ENCODE measurements at regions of chr1 and their contacts with region 1.

Region 1: GRCh38 chr1:115337633-115338456 is at the start of gene NGF:
- DNase-seq: peak; percentile 29 to 89
- H3K4me3 ChIP-seq: peak within 1 kb of the TSS; percentile 56 to 69
- H3K27ac ChIP-seq: peak within 1 kb of the TSS; percentile 87 to 89
- H3K4me1 ChIP-seq: peaks cover 9 to 33% of the 10 kb centered on the region in 2 donors
- H3K27me3 ChIP-seq: no peaks in the 10 kb centered on the region
- CTCF ChIP-seq: no peak
- total RNA-seq, gene NGF: 2.1 TPM

Region 2: DNA sequence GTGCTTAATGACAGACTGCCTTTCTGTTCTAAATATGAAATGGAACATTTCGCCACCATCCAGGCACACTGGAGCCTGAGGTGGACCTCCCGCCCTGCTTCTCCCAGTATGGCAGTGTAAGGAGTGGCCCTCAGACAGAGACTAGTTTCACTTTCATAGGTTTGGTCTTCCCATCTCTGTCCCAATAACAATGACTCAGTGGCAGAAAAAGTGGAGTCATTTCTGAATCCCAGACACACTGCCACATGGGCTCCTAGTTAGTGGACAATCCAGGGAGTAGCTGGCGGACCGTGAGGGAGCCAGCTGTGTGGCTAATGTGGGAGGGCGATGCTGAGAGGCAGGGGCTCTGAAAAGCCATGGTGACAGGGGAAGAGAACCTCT is 152.9 kb before region 1 on chr1:
- intact Hi-C with region 1: loop called (anchors 2 kb)
- DNase-seq: peak; percentile 58 to 89
- H3K4me3 ChIP-seq: peak overlapping the region; percentile 12 to 50
- H3K27ac ChIP-seq: peak overlapping the region; percentile 89 to 95
- H3K4me1 ChIP-seq: peaks cover 16 to 39% of the 10 kb centered on the region in 2 donors
- H3K27me3 ChIP-seq: no peaks in the 10 kb centered on the region
- CTCF ChIP-seq: no peak

Region 3: DNA sequence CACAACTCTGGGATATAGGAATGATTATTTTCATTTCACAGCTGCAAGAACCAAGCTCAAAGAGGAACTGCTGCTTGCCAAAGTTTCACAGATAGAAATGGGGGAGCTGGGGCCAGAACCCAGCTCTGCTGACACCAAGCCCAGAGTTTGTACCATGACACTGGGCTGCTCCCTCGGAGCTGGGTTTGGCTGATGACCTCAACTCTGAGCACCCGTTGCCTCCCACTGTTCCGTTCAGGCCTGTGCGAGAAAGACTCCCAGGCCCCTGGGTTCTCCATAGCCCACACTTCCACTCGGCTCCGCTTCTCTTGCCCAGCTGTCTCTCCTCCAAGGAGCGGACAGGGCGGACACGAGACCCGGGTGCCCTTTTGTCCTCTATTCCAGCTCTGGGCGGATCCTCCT is 55.0 kb before region 1 on chr1:
- intact Hi-C with region 1: loop called (anchors 2 kb)
- DNase-seq: peak; percentile 61 to 85
- H3K4me3 ChIP-seq: peak overlapping the region; percentile 4 to 51
- H3K27ac ChIP-seq: peak overlapping the region; percentile 91 to 95
- H3K4me1 ChIP-seq: peaks cover 11 to 31% of the 10 kb centered on the region in 2 donors
- H3K27me3 ChIP-seq: no peaks in the 10 kb centered on the region
- CTCF ChIP-seq: no peak

Region 4: GRCh38 chr1:115426231-115426771 is 88.5 kb after region 1 on chr1:
- intact Hi-C with region 1: loop called (anchors 5 kb)
- DNase-seq: peak; percentile 38 to 91
- H3K4me3 ChIP-seq: no peak overlapping the region
- H3K27ac ChIP-seq: peak overlapping the region; percentile 77 to 79
- H3K4me1 ChIP-seq: peaks cover 0 to 13% of the 10 kb centered on the region in 2 donors
- H3K27me3 ChIP-seq: no peaks in the 10 kb centered on the region
- CTCF ChIP-seq: no peak

Region 5: DNA sequence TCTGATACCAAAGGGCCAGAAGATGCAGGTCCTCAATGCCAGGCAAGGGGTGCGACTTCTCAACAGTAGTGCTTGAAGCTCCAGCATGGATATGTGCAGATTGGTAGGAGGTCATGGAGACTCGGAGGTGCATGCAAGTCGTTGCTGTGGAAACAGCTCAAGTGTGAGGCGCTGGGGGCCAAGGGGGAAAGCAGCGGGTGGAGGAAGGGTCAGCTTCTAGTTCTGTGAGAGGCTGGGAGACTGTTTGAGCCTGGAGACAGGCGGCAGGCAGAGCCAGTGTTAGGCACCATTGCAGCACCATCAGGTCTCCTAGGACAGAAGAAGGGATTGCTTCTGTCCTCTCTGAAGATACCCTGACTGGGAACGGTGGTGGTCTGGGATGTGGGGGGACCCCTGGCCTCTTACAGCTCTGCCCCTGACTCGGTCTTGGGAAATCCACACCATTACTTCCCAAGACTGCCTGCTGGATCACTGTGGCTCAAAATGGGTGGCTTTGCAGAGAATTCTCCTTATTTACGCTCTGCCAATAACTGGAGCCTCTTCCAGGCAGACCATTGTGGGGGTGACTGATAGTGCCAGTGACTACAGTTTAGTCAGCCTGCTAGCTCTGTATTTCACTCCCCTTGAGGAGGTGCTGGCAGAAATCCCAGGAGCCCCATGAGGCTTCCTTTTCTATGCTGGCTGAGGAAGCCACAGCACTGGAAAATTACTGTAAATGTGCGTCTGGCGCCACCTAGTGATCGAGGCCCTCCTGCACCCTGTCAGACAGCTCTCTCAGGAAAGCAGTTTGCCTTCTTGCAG is 257.6 kb after region 1 on chr1:
- intact Hi-C with region 1: loop called (anchors 10 kb)
- DNase-seq: peak; percentile 12 to 92
- H3K4me3 ChIP-seq: no peak overlapping the region
- H3K27ac ChIP-seq: no peak overlapping the region
- H3K4me1 ChIP-seq: peaks cover 0 to 2% of the 10 kb centered on the region in 2 donors
- H3K27me3 ChIP-seq: no peaks in the 10 kb centered on the region
- CTCF ChIP-seq: peak; percentile 87 to 92 (median 87)

Region 6: GRCh38 chr1:116064616-116065015 is 726.8 kb after region 1 on chr1:
- intact Hi-C with region 1: no loop called
- DNase-seq: no peak
- H3K4me3 ChIP-seq: no peak overlapping the region
- H3K27ac ChIP-seq: no peak overlapping the region
- H3K4me1 ChIP-seq: no peaks in the 10 kb centered on the region
- H3K27me3 ChIP-seq: no peaks in the 10 kb centered on the region
- CTCF ChIP-seq: no peak

Region 7: GRCh38 chr1:116390195-116390594 is 1052.3 kb after region 1 on chr1:
- intact Hi-C with region 1: no loop called
- DNase-seq: no peak
- H3K4me3 ChIP-seq: no peak overlapping the region
- H3K27ac ChIP-seq: no peak overlapping the region
- H3K4me1 ChIP-seq: no peaks in the 10 kb centered on the region
- H3K27me3 ChIP-seq: no peaks in the 10 kb centered on the region
- CTCF ChIP-seq: no peak